Gastrocnemius medialis (tissue), 4 donors: ENCODE measurements at regions of chr9 and their contacts with region 1.

Region 1: DNA sequence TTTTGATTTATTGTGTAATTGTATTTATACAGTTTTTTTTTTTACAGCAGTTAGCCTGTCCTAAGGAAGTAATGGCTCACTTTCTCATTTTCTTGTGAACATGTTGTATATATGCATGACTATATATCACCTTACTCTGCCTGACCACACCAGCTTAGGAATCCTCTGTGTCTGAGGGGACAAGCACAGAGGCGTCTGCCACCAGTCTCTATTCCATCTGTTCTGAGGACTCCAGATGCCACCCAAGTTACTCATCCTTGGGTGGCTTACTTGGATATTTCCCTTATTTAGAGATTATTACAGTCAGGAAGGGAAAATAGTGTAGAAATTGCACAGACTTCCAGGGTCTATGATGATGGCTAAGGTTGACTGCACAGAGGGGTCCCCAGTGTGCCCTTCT is 256.3 kb upstream of the C9orf72 start:
- DNase-seq: no peak
- ATAC-seq: no peak
- H3K4me3 ChIP-seq: no peak overlapping the region
- H3K27ac ChIP-seq: no peak overlapping the region
- H3K4me1 ChIP-seq: no peaks in the 10 kb centered on the region
- H3K27me3 ChIP-seq: no peaks in the 10 kb centered on the region
- CTCF ChIP-seq: no peak
- POLR2A ChIP-seq: no peak

Region 2: GRCh38 chr9:27847818-27848217 is 18.2 kb after region 1 on chr9:
- in situ Hi-C with region 1: no loop called
- intact Hi-C with region 1: no loop called
- DNase-seq: no peak
- ATAC-seq: no peak
- H3K4me3 ChIP-seq: no peak overlapping the region
- H3K27ac ChIP-seq: no peak overlapping the region
- H3K4me1 ChIP-seq: no peaks in the 10 kb centered on the region
- H3K27me3 ChIP-seq: no peaks in the 10 kb centered on the region
- CTCF ChIP-seq: no peak
- POLR2A ChIP-seq: no peak

Region 3: DNA sequence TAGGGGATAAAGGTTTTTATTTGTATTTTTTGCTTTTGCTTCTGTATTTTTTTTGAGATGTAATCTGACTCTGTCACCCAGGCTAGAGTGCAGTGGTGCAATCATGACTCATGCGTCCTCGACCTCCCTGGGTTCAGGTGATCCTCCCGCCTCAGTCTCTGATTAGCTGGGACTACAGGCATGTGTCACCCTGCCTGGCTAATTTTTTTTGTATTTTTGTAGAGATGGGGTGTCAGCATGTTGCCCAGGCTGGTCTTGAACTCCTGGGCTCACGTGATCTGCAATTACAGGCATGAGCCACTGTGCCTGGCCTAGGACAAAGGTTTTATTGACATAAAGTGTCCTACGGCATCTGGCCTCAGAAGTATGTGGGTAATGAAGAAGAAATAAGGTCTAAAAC is 40.8 kb after region 1 on chr9:
- in situ Hi-C with region 1: loop called in 1 of 4 experiments (anchors 10 kb)
- intact Hi-C with region 1: no loop called
- DNase-seq: no peak
- ATAC-seq: no peak
- H3K4me3 ChIP-seq: no peak overlapping the region
- H3K27ac ChIP-seq: no peak overlapping the region
- H3K4me1 ChIP-seq: no peaks in the 10 kb centered on the region
- H3K27me3 ChIP-seq: no peaks in the 10 kb centered on the region
- CTCF ChIP-seq: no peak
- POLR2A ChIP-seq: no peak

Region 4: DNA sequence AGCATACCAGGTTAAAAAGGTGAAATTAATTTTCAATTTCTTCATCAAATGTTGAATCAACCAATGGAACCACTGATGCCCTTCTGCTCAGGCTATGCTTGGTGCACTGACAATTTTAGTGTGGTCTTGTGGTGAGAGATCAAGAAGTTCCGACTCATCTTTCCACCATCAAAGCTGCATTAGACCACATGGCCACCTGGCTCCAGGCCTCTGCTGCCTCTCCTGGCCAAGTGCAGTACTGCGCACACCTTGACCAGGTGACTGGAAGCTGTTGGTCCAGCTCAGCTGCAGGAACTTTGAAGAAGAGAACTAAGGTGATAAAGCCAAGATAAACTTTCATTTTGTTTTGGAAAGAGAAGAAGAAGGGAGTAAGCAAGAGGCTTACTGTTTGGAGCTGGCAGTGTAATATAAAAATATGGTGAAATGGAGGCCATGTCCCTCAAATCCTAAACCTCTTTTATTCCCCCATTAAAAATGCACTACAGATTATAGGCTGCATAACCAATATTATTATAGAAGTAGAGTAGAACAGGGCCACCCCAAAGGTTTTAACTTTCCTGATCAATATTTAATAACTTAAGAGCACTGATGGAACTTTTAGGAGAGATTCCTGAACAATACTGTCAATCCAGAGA is 59.2 kb after region 1 on chr9:
- in situ Hi-C with region 1: loop called in 1 of 4 experiments (anchors 10 kb)
- intact Hi-C with region 1: no loop called
- DNase-seq: no peak
- ATAC-seq: no peak
- H3K4me3 ChIP-seq: no peak overlapping the region
- H3K27ac ChIP-seq: no peak overlapping the region
- H3K4me1 ChIP-seq: no peaks in the 10 kb centered on the region
- H3K27me3 ChIP-seq: no peaks in the 10 kb centered on the region
- CTCF ChIP-seq: peak in 2 of 5 experiments; percentile 22 to 51
- POLR2A ChIP-seq: no peak